Heart left ventricle (tissue), 16 donors: ENCODE measurements at regions of chr16 and their contacts with region 1.

Region 1: DNA sequence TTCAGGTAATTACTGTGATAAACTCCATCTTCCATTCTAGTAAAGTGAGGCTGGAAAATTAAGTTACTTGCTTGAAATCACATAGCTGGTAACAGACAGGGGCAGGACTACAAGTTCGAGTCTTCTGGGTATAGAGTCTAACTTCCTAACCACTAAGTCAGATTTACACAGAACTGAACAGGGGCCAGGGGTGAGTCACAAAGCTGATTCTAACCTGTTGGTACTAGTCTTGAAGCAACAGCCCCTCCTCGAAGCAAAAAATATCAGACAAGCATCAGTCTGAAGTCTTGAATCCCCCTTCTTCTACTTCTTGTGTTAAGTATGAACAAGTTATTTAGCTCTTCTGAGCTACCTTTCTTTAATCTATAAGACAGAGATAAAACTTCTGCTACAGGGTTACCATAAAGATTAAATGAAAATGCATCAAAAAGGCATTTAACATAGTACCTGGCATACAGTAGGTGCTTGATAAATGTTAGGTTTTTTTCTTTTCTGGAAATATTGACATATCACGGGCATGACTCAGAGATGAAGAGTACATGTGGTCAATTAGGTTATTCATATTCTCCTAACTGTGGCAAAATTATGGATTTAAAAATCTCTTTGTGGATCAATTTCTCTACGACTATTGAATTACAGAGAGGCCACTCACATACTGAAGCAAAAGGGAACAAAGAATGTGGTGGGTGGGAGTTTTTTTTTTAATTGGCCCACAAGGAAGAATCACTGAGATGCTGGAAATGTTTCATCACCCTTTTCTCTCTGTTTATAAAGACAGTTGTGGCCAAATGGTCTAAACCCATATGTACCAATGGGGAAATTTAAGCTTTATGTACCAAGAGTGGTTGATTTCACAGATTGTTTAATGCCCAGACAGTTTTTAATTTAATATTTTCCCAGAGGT is 266.9 kb upstream of the DYNLRB2 start:
- DNase-seq: no peak
- ATAC-seq: no peak
- H3K4me3 ChIP-seq: no peak overlapping the region
- H3K27ac ChIP-seq: no peak overlapping the region
- H3K4me1 ChIP-seq: no peaks in the 10 kb centered on the region
- H3K27me3 ChIP-seq: no peaks in the 10 kb centered on the region
- CTCF ChIP-seq: no peak
- POLR2A ChIP-seq: no peak

Region 2: DNA sequence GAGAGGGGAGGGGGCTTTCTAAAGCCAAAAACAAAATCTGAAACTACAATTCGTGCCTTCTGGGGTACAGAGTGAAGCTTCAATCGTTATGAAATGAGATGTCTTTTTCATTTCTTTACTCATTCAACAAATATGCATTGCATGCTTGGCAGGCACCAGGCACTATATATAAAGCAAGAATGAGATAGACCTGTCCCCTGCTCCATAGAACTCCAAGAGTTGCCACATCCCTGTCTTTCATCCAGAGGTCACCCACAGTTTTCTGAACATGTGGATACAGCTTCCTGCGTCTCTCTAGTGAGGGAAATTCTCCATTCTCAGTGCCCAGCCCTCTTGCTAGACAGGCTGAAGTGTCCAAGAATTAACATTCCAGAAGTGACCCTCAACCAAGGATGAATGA is 330.2 kb before region 1 on chr16:
- intact Hi-C with region 1: no loop called
- DNase-seq: no peak
- ATAC-seq: peak; percentile 51 to 78 (median 66)
- H3K4me3 ChIP-seq: no peak overlapping the region
- H3K27ac ChIP-seq: no peak overlapping the region
- H3K4me1 ChIP-seq: peaks cover 0 to 5% (median 0%) of the 10 kb centered on the region in 12 donors
- H3K27me3 ChIP-seq: no peaks in the 10 kb centered on the region
- CTCF ChIP-seq: no peak
- POLR2A ChIP-seq: no peak

Region 3: DNA sequence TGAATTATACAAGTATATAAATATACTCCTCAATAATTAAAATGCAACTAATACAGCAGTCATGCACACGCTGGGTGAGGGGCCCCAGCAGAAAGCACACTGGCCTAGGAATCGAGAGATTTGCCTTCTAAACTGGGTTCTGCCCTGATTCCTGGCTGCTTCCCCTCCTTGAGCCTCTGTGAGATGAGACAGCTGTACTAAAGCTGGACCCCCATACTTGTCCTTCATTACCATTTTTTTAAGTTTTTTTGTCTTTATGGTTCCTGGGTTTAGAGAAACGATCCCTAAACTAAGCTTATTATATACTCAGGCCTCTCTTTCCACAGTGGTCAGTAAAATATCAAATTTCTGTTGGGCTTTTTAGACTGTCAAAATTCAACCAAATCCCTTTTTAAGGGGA is 71.8 kb after region 1 on chr16:
- intact Hi-C with region 1: loop called in 1 of 10 experiments (anchors 2 kb)
- DNase-seq: no peak
- ATAC-seq: no peak
- H3K4me3 ChIP-seq: no peak overlapping the region
- H3K27ac ChIP-seq: no peak overlapping the region
- H3K4me1 ChIP-seq: peaks cover 0 to 12% (median 0%) of the 10 kb centered on the region in 12 donors
- H3K27me3 ChIP-seq: peaks cover 0 to under 1% (median 0%) of the 10 kb centered on the region in 9 donors
- CTCF ChIP-seq: no peak
- POLR2A ChIP-seq: no peak